ENCODE measurements at regions of chr7 and their contacts with region 1.

Region 1: GRCh38 chr7:91264046-91264923 is at the start of gene FZD1:
- DNase-seq: peak; percentile 98
- H3K4me3 ChIP-seq: peak within 1 kb of the TSS; percentile 60 to 88 (median 75)
- H3K27ac ChIP-seq: peak within 1 kb of the TSS; percentile 89 to 98 (median 97)
- H3K4me1 ChIP-seq: peaks cover 0 to 39% (median 27%) of the 10 kb centered on the region in 4 donors
- H3K27me3 ChIP-seq: no peaks in the 10 kb centered on the region
- CTCF ChIP-seq: no peak
- EP300 ChIP-seq: no peak
- POLR2A ChIP-seq: peak; percentile 44 to 67
- total RNA-seq, gene FZD1: 14.5 to 20.5 (median 16.8) TPM

Region 2: GRCh38 chr7:90346336-90347125 is 917.8 kb before region 1 on chr7 and contains the start of gene GTPBP10:
- intact Hi-C with region 1: loop called (anchors 10 kb)
- DNase-seq: peak; percentile 96
- H3K4me3 ChIP-seq: peak within 1 kb of the TSS; percentile 64 to 86 (median 68)
- H3K27ac ChIP-seq: peak within 1 kb of the TSS; percentile 80 to 87 (median 84)
- H3K4me1 ChIP-seq: peaks cover 0 to 17% (median 11%) of the 10 kb centered on the region in 4 donors
- H3K27me3 ChIP-seq: no peaks in the 10 kb centered on the region
- CTCF ChIP-seq: peak; percentile 39 to 81 (median 64)
- EP300 ChIP-seq: peak in 1 of 4 donors; percentile 32
- POLR2A ChIP-seq: peak; percentile 34 to 54
- total RNA-seq, gene GTPBP10: 9.7 to 16.8 (median 13.3) TPM

Region 3: GRCh38 chr7:91083855-91084644 is 180.2 kb before region 1 on chr7:
- intact Hi-C with region 1: loop called (anchors 2 kb)
- DNase-seq: no peak
- H3K4me3 ChIP-seq: no peak overlapping the region
- H3K27ac ChIP-seq: no peak overlapping the region
- H3K4me1 ChIP-seq: peaks cover 0 to 50% (median 32%) of the 10 kb centered on the region in 4 donors
- H3K27me3 ChIP-seq: no peaks in the 10 kb centered on the region
- CTCF ChIP-seq: no peak
- EP300 ChIP-seq: no peak
- POLR2A ChIP-seq: no peak

Region 4: DNA sequence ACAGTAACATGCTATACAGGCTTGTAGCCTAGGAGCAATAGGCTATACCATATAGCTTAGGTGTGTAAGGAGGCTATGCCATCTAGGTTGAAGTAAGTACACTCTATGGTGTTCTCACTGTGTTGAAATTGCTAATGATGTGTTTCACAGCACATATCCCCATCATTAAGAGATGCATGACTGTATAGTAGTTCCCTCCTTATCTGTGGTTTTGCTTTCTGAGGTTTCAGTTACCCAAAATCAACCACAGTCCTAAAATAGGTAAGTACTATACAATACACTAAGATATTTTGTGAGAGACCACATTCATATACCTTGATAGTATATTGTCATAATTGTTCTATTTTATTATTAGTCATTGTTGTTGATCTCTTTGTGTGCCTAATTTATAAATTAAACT is 12.6 kb after region 1 on chr7:
- intact Hi-C with region 1: no loop called
- DNase-seq: no peak
- H3K4me3 ChIP-seq: no peak overlapping the region
- H3K27ac ChIP-seq: no peak overlapping the region
- H3K4me1 ChIP-seq: no peaks in the 10 kb centered on the region
- H3K27me3 ChIP-seq: no peaks in the 10 kb centered on the region
- CTCF ChIP-seq: no peak
- EP300 ChIP-seq: no peak
- POLR2A ChIP-seq: no peak

Region 5: DNA sequence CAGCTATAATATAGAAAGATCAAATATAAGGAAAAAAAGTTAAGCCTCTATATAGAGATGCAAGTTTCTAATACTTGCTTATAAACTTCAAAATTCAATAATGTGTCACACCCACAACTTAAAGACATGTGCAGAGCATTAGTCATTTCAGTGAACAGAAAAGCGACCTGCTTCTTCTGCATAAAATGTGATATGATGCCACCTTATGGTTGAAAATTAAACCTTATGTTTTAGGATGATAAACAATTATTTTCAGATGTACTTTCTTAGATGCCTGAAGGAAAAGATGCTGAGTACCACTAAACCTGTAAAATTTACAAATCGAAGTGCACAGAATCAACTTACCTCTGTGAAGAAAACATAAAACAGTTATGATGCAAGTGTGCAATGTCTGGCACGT is 520.2 kb after region 1 on chr7:
- intact Hi-C with region 1: loop called (anchors 10 kb)
- DNase-seq: no peak
- H3K4me3 ChIP-seq: no peak overlapping the region
- H3K27ac ChIP-seq: no peak overlapping the region
- H3K4me1 ChIP-seq: no peaks in the 10 kb centered on the region
- H3K27me3 ChIP-seq: no peaks in the 10 kb centered on the region
- CTCF ChIP-seq: peak in 3 of 4 experiments; percentile 17 to 39 (median 30)
- EP300 ChIP-seq: no peak
- POLR2A ChIP-seq: no peak

Region 6: DNA sequence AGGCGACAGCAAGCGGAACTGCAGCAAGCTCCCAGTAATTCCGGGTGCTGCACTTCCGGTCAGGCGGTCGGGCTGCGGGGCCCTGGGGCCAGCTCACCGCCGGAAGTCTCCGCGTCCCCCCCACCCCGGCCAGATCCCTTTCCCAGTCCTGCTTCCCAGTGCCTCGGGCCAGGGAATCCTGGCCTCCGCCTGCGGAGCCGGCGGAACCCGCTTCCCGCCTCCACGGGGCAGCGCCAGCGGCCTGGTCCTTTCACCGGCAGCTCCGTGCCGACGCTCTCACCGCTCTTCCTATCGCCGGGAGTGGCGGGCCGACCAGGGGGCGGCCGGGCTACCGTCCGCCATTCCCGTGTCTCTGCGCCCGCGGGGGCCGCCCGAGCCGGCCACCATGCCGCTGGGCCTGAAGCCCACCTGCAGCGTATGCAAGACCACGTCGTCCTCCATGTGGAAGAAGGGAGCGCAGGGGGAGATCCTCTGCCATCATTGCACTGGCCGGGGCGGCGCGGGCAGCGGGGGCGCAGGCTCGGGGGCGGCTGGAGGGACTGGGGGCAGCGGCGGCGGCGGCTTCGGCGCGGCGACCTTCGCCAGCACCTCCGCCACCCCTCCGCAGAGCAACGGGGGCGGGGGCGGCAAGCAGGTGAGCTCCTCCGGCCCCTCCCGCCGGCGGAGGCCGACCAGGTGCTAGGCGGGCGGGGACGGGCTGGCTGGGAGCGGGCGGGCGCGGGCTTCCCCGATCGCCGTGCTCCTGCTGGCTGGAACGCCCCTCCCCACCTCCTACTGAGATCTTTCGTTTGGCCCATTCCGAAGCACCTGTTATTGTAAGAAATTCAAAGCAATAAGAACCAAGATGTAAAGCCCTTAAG is 1183.3 kb after region 1 on chr7 and contains the start of gene GATAD1:
- intact Hi-C with region 1: loop called (anchors 5 kb)
- DNase-seq: peak; percentile 96
- H3K4me3 ChIP-seq: peak within 1 kb of the TSS; percentile 93 to 97 (median 94)
- H3K27ac ChIP-seq: peak within 1 kb of the TSS; percentile 93 to 99 (median 97)
- H3K4me1 ChIP-seq: peaks cover 0 to 11% (median 8%) of the 10 kb centered on the region in 4 donors
- H3K27me3 ChIP-seq: no peaks in the 10 kb centered on the region
- CTCF ChIP-seq: peak in 3 of 4 experiments; percentile 84 to 96 (median 92)
- EP300 ChIP-seq: no peak
- POLR2A ChIP-seq: peak; percentile 75 to 76
- total RNA-seq, gene GATAD1: 26.5 to 57.1 (median 47.7) TPM

Measured in sigmoid colon (tissue), 7 donors.